ENCODE measurements at regions of chr7 and their contacts with region 1.

Region 1: DNA sequence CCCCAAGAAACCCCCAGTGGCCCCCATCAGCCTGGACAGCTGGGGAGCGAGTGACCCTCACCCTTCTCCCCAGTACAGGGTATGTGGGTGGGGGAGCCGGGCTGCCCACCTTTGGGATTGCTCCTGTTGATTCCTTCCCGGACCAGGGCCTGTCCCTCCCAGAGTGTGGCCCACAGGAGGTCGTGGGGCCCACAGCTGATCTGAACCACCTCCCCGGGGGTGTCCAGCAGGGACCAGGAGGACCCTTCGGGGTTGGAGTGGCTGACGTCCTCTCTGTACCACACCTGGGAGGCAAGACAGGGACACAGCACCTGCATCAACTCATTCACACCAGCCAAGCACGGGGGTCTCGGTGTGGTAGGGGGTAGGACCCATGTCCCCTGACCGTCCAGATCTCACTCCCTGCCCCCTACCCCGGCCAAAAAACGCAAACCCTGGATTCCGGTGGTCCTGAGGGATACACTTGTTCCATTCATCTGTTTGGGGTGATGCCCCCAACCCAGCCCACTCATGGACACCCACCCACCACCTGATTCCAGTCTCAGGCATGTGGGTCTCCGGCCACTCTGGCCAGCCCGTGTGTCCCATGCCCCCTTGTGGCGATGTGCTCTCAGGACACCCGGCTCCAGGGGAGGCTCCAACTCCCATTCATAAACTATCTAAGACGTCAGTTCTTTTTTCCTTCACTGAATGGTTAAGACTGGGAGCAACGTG is 10.9 kb downstream of the TECPR1 start:
- DNase-seq: peak in 1 of 2 experiments; percentile 70
- H3K4me3 ChIP-seq: no peak overlapping the region
- H3K4me3 Mint-ChIP-seq: no peak overlapping the region
- H3K27ac Mint-ChIP-seq: peak overlapping the region; percentile 63
- H3K4me1 ChIP-seq: no peaks in the 10 kb centered on the region
- H3K4me1 Mint-ChIP-seq: no peaks in the 10 kb centered on the region
- H3K27me3 ChIP-seq: no peaks in the 10 kb centered on the region
- H3K27me3 Mint-ChIP-seq: no peaks in the 10 kb centered on the region
- CTCF ChIP-seq: peak; percentile 74 to 78

Region 2: DNA sequence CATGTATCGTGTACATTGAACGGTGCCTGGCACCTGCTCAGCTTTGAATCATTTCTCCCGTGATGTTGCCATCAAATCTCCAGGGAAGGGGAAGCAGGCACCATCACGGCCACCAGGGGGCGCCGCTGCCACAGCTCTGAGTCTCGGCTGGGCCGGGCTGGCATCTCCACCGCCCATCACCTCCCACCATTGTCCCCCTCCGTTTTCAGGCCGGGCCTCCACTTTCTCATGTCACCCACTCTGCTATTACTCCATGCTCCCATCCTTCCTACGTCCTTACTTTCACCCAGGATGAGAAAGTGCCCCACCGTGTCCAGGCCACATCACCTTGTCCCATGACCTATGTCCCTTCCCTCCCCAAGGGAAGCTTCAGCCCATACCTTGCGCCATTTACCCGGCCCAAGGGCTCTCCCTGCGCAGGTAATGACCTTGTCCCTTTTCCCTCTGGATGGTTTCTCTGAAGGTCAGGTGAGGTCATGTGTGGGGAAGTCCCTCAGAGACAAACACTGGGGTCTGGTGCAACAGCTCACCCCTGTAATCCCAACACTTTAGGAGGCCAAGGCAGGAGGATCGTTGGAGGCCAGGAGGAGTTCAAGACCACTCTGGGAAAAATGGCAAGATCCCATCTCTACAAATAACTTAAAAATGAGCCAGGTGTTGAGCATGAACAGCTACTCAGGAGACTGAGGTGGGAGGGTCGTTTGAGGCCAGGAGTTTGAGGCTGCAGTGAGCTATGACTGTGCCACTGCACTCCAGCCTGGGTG is 219.3 kb before region 1 on chr7:
- CTCF ChIA-PET with region 1: no interaction called
- POLR2A ChIA-PET with region 1: no interaction called
- intact Hi-C with region 1: loop called (anchors 5 kb)
- DNase-seq: peak; percentile 69 to 88
- H3K4me3 ChIP-seq: no peak overlapping the region
- H3K4me3 Mint-ChIP-seq: no peak overlapping the region
- H3K27ac Mint-ChIP-seq: no peak overlapping the region
- H3K4me1 ChIP-seq: no peaks in the 10 kb centered on the region
- H3K4me1 Mint-ChIP-seq: no peaks in the 10 kb centered on the region
- H3K27me3 ChIP-seq: no peaks in the 10 kb centered on the region
- H3K27me3 Mint-ChIP-seq: peaks cover 2% of the 10 kb centered on the region
- CTCF ChIP-seq: peak; percentile 92 to 93

Measured in Caco-2 (cell line).